CD8-positive, alpha-beta T cell (primary cell): ENCODE measurements at regions of chr4 and their contacts with region 1.

Region 1: GRCh38 chr4:109486007-109486406 is 52.4 kb downstream of the SEC24B start:
- DNase-seq: no peak
- ATAC-seq: no peak
- H3K4me3 ChIP-seq: no peak overlapping the region
- H3K4me3 Mint-ChIP-seq: no peak overlapping the region
- H3K27ac ChIP-seq: no peak overlapping the region
- H3K27ac Mint-ChIP-seq: no peak overlapping the region
- H3K4me1 ChIP-seq: no peaks in the 10 kb centered on the region
- H3K4me1 Mint-ChIP-seq: peaks cover 26% of the 10 kb centered on the region
- H3K27me3 ChIP-seq: no peaks in the 10 kb centered on the region
- H3K27me3 Mint-ChIP-seq: no peaks in the 10 kb centered on the region
- CTCF ChIP-seq: no peak

Region 2: GRCh38 chr4:109448828-109449227 is 37.2 kb before region 1 on chr4:
- CTCF ChIA-PET with region 1: no interaction called
- POLR2A ChIA-PET with region 1: no interaction called
- intact Hi-C with region 1: loop called in 1 of 2 experiments (anchors 5 kb)
- DNase-seq: no peak
- ATAC-seq: no peak
- H3K4me3 ChIP-seq: no peak overlapping the region
- H3K4me3 Mint-ChIP-seq: no peak overlapping the region
- H3K27ac ChIP-seq: no peak overlapping the region
- H3K27ac Mint-ChIP-seq: no peak overlapping the region
- H3K4me1 ChIP-seq: peaks cover 14% of the 10 kb centered on the region
- H3K4me1 Mint-ChIP-seq: peaks cover 60% of the 10 kb centered on the region
- H3K27me3 ChIP-seq: no peaks in the 10 kb centered on the region
- H3K27me3 Mint-ChIP-seq: no peaks in the 10 kb centered on the region
- CTCF ChIP-seq: no peak

Region 3: GRCh38 chr4:109511414-109511813 is 25.4 kb after region 1 on chr4:
- CTCF ChIA-PET with region 1: no interaction called
- POLR2A ChIA-PET with region 1: no interaction called
- intact Hi-C with region 1: no loop called
- DNase-seq: no peak
- ATAC-seq: no peak
- H3K4me3 ChIP-seq: no peak overlapping the region
- H3K4me3 Mint-ChIP-seq: no peak overlapping the region
- H3K27ac ChIP-seq: no peak overlapping the region
- H3K27ac Mint-ChIP-seq: no peak overlapping the region
- H3K4me1 ChIP-seq: no peaks in the 10 kb centered on the region
- H3K4me1 Mint-ChIP-seq: peaks cover 2% of the 10 kb centered on the region
- H3K27me3 ChIP-seq: no peaks in the 10 kb centered on the region
- H3K27me3 Mint-ChIP-seq: no peaks in the 10 kb centered on the region
- CTCF ChIP-seq: no peak